ENCODE measurements at regions of chr9 and their contacts with region 1.

Region 1: GRCh38 chr9:127785023-127785932 is 556 bp upstream of the CDK9 start:
- DNase-seq: peak; percentile 82 to 93 (median 90)
- ATAC-seq: peak; percentile 65
- H3K4me3 ChIP-seq: peak overlapping the region; percentile 53
- H3K4me3 Mint-ChIP-seq: peak overlapping the region; percentile 82 to 95 (median 92)
- H3K27ac ChIP-seq: peak overlapping the region; percentile 90
- H3K27ac Mint-ChIP-seq: peak overlapping the region; percentile 91 to 98 (median 96)
- H3K4me1 ChIP-seq: peaks cover 56 to 59% of the 10 kb centered on the region in 2 donors
- H3K4me1 Mint-ChIP-seq: peaks cover 34 to 75% (median 61%) of the 10 kb centered on the region in 7 donors
- H3K27me3 ChIP-seq: no peaks in the 10 kb centered on the region
- H3K27me3 Mint-ChIP-seq: no peaks in the 10 kb centered on the region

Region 2: GRCh38 chr9:127450830-127451724 is 334.2 kb before region 1 on chr9 and contains the starts of genes LRSAM1 and RPL12:
- CTCF ChIA-PET with region 1: no interaction called
- POLR2A ChIA-PET with region 1: no interaction called
- intact Hi-C with region 1: loop called in 1 of 2 experiments (anchors 5 kb)
- DNase-seq: peak; percentile 95 to 100 (median 98)
- ATAC-seq: peak; percentile 85
- H3K4me3 ChIP-seq: peak within 1 kb of the TSS; percentile 75
- H3K4me3 Mint-ChIP-seq: peak within 1 kb of the TSS; percentile 83 to 98 (median 94)
- H3K27ac ChIP-seq: peak within 1 kb of the TSS; percentile 86
- H3K27ac Mint-ChIP-seq: peak within 1 kb of the TSS; percentile 76 to 97 (median 94)
- H3K4me1 ChIP-seq: peaks cover 21 to 25% of the 10 kb centered on the region in 2 donors
- H3K4me1 Mint-ChIP-seq: peaks cover 21 to 45% (median 40%) of the 10 kb centered on the region in 7 donors
- H3K27me3 ChIP-seq: no peaks in the 10 kb centered on the region
- H3K27me3 Mint-ChIP-seq: no peaks in the 10 kb centered on the region
- total RNA-seq, gene LRSAM1: 15.1 to 23.3 (median 19.8) TPM
- total RNA-seq, gene RPL12: 1,005 to 1,932 (median 1,675) TPM

Region 3: GRCh38 chr9:127586537-127586936 is 198.7 kb before region 1 on chr9:
- CTCF ChIA-PET with region 1: no interaction called
- POLR2A ChIA-PET with region 1: no interaction called
- intact Hi-C with region 1: loop called in 1 of 2 experiments (anchors 2 kb)
- DNase-seq: peak; percentile 24 to 60 (median 53)
- ATAC-seq: peak; percentile 79
- H3K4me3 ChIP-seq: no peak overlapping the region
- H3K4me3 Mint-ChIP-seq: no peak overlapping the region
- H3K27ac ChIP-seq: no peak overlapping the region
- H3K27ac Mint-ChIP-seq: peak overlapping the region in 1 of 9 donors; percentile 56
- H3K4me1 ChIP-seq: no peaks in the 10 kb centered on the region
- H3K4me1 Mint-ChIP-seq: peaks cover 0 to 16% (median 0%) of the 10 kb centered on the region in 7 donors
- H3K27me3 ChIP-seq: no peaks in the 10 kb centered on the region
- H3K27me3 Mint-ChIP-seq: peaks cover 0 to 22% (median 5%) of the 10 kb centered on the region in 5 donors

Region 4: DNA sequence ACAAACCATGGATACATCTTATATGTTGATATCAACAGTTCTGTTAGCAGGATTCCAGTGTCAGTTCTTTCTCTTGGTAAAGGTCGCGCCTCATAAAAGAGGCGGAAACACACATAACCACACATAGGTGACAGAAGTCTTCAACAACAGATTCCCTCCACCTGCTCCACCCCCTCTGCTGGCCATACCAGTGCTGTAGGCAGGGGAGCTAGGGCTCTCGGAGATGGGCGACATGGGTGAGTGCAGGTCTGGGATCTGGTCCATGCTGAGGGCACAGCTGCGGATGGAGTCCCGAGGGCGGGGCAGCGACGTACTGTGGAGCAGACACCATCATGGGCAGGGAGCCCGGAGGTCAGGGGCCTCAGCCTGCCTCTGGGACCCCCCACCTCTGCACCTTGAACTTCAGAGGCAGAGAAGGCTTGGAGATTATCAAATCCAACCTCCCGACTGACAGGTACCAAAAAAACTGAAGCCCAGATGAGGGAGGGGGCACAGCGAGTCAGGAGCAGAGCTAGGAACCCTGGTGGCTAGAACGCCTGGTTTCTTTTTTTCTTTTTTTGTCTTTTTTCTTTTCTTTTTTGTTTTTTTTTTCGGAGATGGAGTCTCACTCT is 38.2 kb before region 1 on chr9:
- CTCF ChIA-PET with region 1: interaction called, 8 read pairs
- POLR2A ChIA-PET with region 1: interaction called, 5 read pairs
- intact Hi-C with region 1: loop called in 1 of 2 experiments (anchors 1 kb)
- DNase-seq: peak in 7 of 9 donors; percentile 38 to 64 (median 46)
- ATAC-seq: peak; percentile 89
- H3K4me3 ChIP-seq: no peak overlapping the region
- H3K4me3 Mint-ChIP-seq: peak overlapping the region in 9 of 10 donors; percentile 37 to 83 (median 66)
- H3K27ac ChIP-seq: peak overlapping the region; percentile 31
- H3K27ac Mint-ChIP-seq: peak overlapping the region; percentile 40 to 92 (median 87)
- H3K4me1 ChIP-seq: no peaks in the 10 kb centered on the region
- H3K4me1 Mint-ChIP-seq: peaks cover 5 to 27% (median 11%) of the 10 kb centered on the region in 7 donors
- H3K27me3 ChIP-seq: no peaks in the 10 kb centered on the region
- H3K27me3 Mint-ChIP-seq: no peaks in the 10 kb centered on the region

Region 5: GRCh38 chr9:127796225-127796813 is 11.0 kb after region 1 on chr9:
- CTCF ChIA-PET with region 1: interaction called, 4 read pairs
- POLR2A ChIA-PET with region 1: interaction called, 34 read pairs
- intact Hi-C with region 1: loop called in 1 of 2 experiments (anchors 1 kb)
- DNase-seq: no peak
- ATAC-seq: peak; percentile 51
- H3K4me3 ChIP-seq: no peak overlapping the region
- H3K4me3 Mint-ChIP-seq: peak overlapping the region; percentile 46 to 78 (median 69)
- H3K27ac ChIP-seq: no peak overlapping the region
- H3K27ac Mint-ChIP-seq: peak overlapping the region; percentile 69 to 94 (median 82)
- H3K4me1 ChIP-seq: peaks cover 19 to 21% of the 10 kb centered on the region in 2 donors
- H3K4me1 Mint-ChIP-seq: peaks cover 13 to 29% (median 22%) of the 10 kb centered on the region in 7 donors
- H3K27me3 ChIP-seq: no peaks in the 10 kb centered on the region
- H3K27me3 Mint-ChIP-seq: no peaks in the 10 kb centered on the region

Region 6: DNA sequence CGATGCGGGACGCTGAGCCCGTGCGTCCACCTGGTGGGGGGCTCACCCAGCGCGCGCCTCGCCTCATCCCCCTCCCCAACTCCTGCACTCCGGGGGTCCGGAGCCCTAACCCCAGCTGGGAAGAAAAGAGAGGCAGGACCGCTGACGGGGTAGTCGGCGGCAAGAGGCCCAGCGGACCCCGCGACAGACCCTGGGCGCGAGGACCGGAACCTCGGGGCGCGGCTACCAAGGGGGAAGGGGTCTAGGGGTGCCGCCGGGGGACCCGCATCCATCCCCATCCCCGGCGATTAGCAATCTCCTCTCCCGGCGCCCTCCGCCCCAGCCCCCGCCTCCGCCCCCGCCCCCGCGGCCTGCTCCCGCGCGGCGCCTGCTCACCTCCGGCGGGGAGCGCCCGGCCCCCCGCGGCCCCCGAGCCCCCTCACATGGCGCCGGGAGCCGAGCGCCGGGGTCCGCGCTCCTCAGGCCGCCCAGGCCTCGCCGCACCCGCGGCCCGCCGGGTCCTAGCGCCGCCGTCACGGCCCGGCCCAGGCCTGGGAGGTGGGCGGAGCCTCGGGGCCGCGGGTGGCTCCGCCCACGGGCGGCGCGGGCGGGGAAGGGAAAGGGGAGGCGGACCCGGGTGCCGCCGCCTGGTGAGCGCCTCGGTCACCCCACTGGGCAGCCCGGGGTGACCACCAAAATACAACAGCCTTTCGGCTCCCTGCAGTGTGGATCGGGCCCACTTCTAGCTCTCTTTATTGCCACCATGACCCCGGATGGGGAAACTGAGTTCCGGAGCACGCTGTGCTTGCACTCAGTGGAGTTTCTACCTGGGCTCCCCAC is 114.1 kb after region 1 on chr9 and contains the start of gene ST6GALNAC6:
- CTCF ChIA-PET with region 1: interaction called, 3 read pairs
- POLR2A ChIA-PET with region 1: interaction called, 41 read pairs
- intact Hi-C with region 1: no loop called
- DNase-seq: peak in 8 of 9 donors; percentile 46 to 90 (median 57)
- ATAC-seq: peak; percentile 94
- H3K4me3 ChIP-seq: peak within 1 kb of the TSS; percentile 68
- H3K4me3 Mint-ChIP-seq: peak within 1 kb of the TSS; percentile 74 to 90 (median 88)
- H3K27ac ChIP-seq: peak within 1 kb of the TSS; percentile 78
- H3K27ac Mint-ChIP-seq: peak within 1 kb of the TSS; percentile 36 to 91 (median 85)
- H3K4me1 ChIP-seq: peaks cover 24 to 26% of the 10 kb centered on the region in 2 donors
- H3K4me1 Mint-ChIP-seq: peaks cover 20 to 59% (median 39%) of the 10 kb centered on the region in 7 donors
- H3K27me3 ChIP-seq: no peaks in the 10 kb centered on the region
- H3K27me3 Mint-ChIP-seq: no peaks in the 10 kb centered on the region
- total RNA-seq, gene ST6GALNAC6: 63.0 to 125 (median 107) TPM

Region 7: GRCh38 chr9:128026773-128027541 is 241.7 kb after region 1 on chr9:
- CTCF ChIA-PET with region 1: no interaction called
- POLR2A ChIA-PET with region 1: interaction called, 4 read pairs
- intact Hi-C with region 1: loop called in 1 of 2 experiments (anchors 5 kb)
- DNase-seq: peak in 8 of 9 donors; percentile 42 to 78 (median 62)
- ATAC-seq: peak; percentile 10
- H3K4me3 ChIP-seq: peak overlapping the region; percentile 52
- H3K4me3 Mint-ChIP-seq: peak overlapping the region; percentile 76 to 91 (median 85)
- H3K27ac ChIP-seq: peak overlapping the region; percentile 96
- H3K27ac Mint-ChIP-seq: peak overlapping the region; percentile 92 to 100 (median 98)
- H3K4me1 ChIP-seq: peaks cover 87 to 88% of the 10 kb centered on the region in 2 donors
- H3K4me1 Mint-ChIP-seq: peaks cover 44 to 94% (median 89%) of the 10 kb centered on the region in 7 donors
- H3K27me3 ChIP-seq: no peaks in the 10 kb centered on the region
- H3K27me3 Mint-ChIP-seq: no peaks in the 10 kb centered on the region